Activated T-helper 2 cell treated with anti-CD3 and anti-CD28 coated beads, Interferon-gamma antibody, Interleukin-2, Interleukin-4, amounts not matched to agents 10 μg/mL and 5 μg/mL and 100 μg/mL, durations not matched to agents 14 hours and 24 hours and 36 hours (primary cell): ENCODE measurements at regions of chr2 and their contacts with region 1.

Region 1: GRCh38 chr2:143034292-143035074 is 94.7 kb upstream of the ARHGAP15 start:
- DNase-seq: peak; percentile 27
- H3K4me3 Mint-ChIP-seq: no peak overlapping the region
- H3K27ac Mint-ChIP-seq: no peak overlapping the region
- H3K4me1 Mint-ChIP-seq: peaks cover 8% of the 10 kb centered on the region
- H3K27me3 Mint-ChIP-seq: peaks cover 8% of the 10 kb centered on the region

Region 2: DNA sequence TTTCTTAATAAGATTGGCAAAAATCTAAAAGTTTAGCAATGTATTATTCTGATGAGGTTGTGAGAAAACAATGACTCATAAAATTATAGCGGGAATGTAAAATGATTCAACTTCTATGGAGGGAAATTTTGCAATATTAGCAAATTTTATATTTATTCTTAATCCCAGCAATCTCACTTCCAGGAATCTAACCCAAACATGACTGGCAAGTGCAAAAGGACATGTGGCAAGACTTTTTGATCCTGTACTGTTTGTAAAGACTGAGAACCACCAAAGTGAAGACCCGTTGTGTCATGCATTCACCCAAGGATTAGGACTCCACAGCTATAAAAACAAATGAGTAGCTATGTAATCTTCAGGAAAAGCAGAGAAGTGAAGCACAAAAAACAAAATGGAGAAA is 391.8 kb before region 1 on chr2:
- intact Hi-C with region 1: no loop called
- DNase-seq: no peak
- H3K4me3 Mint-ChIP-seq: no peak overlapping the region
- H3K27ac Mint-ChIP-seq: no peak overlapping the region
- H3K4me1 Mint-ChIP-seq: no peaks in the 10 kb centered on the region
- H3K27me3 Mint-ChIP-seq: no peaks in the 10 kb centered on the region

Region 3: GRCh38 chr2:143083636-143084035 is 49.2 kb after region 1 on chr2:
- intact Hi-C with region 1: loop called (anchors 5 kb)
- DNase-seq: no peak
- H3K4me3 Mint-ChIP-seq: no peak overlapping the region
- H3K27ac Mint-ChIP-seq: peak overlapping the region; percentile 22
- H3K4me1 Mint-ChIP-seq: peaks cover 34% of the 10 kb centered on the region
- H3K27me3 Mint-ChIP-seq: peaks cover 6% of the 10 kb centered on the region

Region 4: DNA sequence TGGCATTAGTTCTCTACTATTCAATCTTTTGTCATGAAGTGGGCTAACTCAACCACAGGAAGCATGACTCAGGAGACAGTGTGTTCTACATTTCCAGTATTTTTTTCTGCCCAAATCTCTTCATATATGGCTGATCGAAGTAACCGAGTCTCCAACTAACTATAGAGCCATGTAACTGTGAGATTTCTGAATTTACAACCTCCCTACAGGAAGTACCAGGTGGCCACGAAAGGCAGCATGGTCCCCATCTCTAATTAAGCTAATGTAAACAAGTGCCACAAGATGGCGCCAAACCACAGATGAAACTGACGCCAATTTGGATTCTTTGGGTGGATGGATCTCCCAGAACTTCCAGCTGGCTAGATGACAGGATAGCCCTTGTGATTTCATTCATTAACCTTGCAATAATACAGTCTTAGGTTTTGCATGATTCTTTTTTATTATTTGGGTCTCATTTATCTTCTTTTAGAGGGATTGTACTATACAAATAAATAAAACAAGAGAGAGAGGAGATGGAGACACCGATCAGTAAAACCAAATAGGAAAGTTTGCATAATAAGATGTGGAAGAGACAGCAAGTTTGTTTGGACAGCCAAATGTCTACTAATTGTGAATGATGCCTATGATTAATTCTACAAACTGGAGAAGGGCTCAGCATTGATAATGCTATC is 76.4 kb after region 1 on chr2:
- intact Hi-C with region 1: loop called (anchors 1 kb)
- DNase-seq: peak; percentile 46
- H3K4me3 Mint-ChIP-seq: no peak overlapping the region
- H3K27ac Mint-ChIP-seq: peak overlapping the region; percentile 64
- H3K4me1 Mint-ChIP-seq: peaks cover 39% of the 10 kb centered on the region
- H3K27me3 Mint-ChIP-seq: peaks cover 8% of the 10 kb centered on the region

Region 5: DNA sequence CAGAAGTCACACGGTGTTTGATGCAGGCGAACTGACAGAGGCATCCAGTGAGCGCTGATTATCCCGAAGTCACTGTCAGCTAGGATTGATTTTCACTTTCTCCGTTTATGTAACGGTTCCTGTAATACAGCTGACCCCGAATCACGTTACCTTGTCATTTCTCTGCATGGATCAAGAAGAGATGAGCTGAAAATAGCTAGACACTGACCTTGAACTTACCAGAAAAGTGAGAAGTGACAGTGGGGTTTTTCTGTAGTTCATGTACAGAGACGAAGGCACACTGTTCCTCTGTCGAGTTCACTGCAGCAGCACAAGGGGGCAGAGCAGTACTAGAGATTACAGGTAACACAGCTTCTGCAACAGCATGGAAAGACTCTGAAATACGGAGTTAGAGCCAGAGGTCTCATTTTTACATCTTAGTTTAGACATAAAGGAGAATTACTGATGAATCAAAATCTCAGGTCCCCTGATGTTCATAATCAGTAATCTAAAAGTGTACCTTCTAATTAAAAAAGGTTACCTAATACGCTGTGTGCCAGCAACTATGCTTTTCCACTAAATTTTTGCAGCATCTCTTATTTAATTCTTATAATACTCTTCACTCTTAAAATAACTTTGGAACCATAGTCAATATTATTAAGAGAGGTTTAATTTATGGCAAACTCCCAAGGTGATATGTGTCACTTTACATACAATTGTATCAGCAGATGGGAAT is 127.8 kb after region 1 on chr2:
- intact Hi-C with region 1: loop called (anchors 2 kb)
- DNase-seq: peak; percentile 12
- H3K4me3 Mint-ChIP-seq: no peak overlapping the region
- H3K27ac Mint-ChIP-seq: peak overlapping the region; percentile 19
- H3K4me1 Mint-ChIP-seq: peaks cover 54% of the 10 kb centered on the region
- H3K27me3 Mint-ChIP-seq: no peaks in the 10 kb centered on the region

Region 6: GRCh38 chr2:143217512-143218115 is 183.1 kb after region 1 on chr2:
- intact Hi-C with region 1: loop called (anchors 1 kb)
- DNase-seq: no peak
- H3K4me3 Mint-ChIP-seq: no peak overlapping the region
- H3K27ac Mint-ChIP-seq: peak overlapping the region; percentile 80
- H3K4me1 Mint-ChIP-seq: peaks cover 34% of the 10 kb centered on the region
- H3K27me3 Mint-ChIP-seq: no peaks in the 10 kb centered on the region

Region 7: GRCh38 chr2:143259368-143259958 is 225.0 kb after region 1 on chr2:
- intact Hi-C with region 1: loop called (anchors 1 kb)
- DNase-seq: peak; percentile 54
- H3K4me3 Mint-ChIP-seq: peak overlapping the region; percentile 63
- H3K27ac Mint-ChIP-seq: peak overlapping the region; percentile 92
- H3K4me1 Mint-ChIP-seq: peaks cover 73% of the 10 kb centered on the region
- H3K27me3 Mint-ChIP-seq: no peaks in the 10 kb centered on the region

Region 8: GRCh38 chr2:143282684-143283083 is 248.2 kb after region 1 on chr2:
- intact Hi-C with region 1: loop called (anchors 2 kb)
- DNase-seq: no peak
- H3K4me3 Mint-ChIP-seq: no peak overlapping the region
- H3K27ac Mint-ChIP-seq: no peak overlapping the region
- H3K4me1 Mint-ChIP-seq: peaks cover 20% of the 10 kb centered on the region
- H3K27me3 Mint-ChIP-seq: no peaks in the 10 kb centered on the region

Region 9: GRCh38 chr2:143629340-143629739 is 594.9 kb after region 1 on chr2:
- intact Hi-C with region 1: no loop called
- DNase-seq: no peak
- H3K4me3 Mint-ChIP-seq: no peak overlapping the region
- H3K27ac Mint-ChIP-seq: no peak overlapping the region
- H3K4me1 Mint-ChIP-seq: peaks cover 2% of the 10 kb centered on the region
- H3K27me3 Mint-ChIP-seq: no peaks in the 10 kb centered on the region